Common myeloid progenitor, CD34-positive (primary cell): ENCODE measurements at regions of chr9 and their contacts with region 1.

Region 1: GRCh38 chr9:114397848-114398605 is 10.2 kb upstream of the AKNA start:
- DNase-seq: peak; percentile 92 to 97 (median 95)
- H3K4me3 ChIP-seq: peak overlapping the region; percentile 44 to 87 (median 85)
- H3K27ac ChIP-seq: peak overlapping the region in 1 of 2 experiments; percentile 66
- H3K4me1 ChIP-seq: peaks cover 0 to 31% (median 22%) of the 10 kb centered on the region in 4 experiments
- H3K27me3 ChIP-seq: no peaks in the 10 kb centered on the region

Region 2: GRCh38 chr9:113973851-113974413 is 424.1 kb before region 1 on chr9:
- CTCF ChIA-PET with region 1: no interaction called
- POLR2A ChIA-PET with region 1: no interaction called
- DNase-seq: no peak
- H3K4me3 ChIP-seq: no peak overlapping the region
- H3K27ac ChIP-seq: no peak overlapping the region
- H3K4me1 ChIP-seq: no peaks in the 10 kb centered on the region
- H3K27me3 ChIP-seq: no peaks in the 10 kb centered on the region

Region 3: GRCh38 chr9:114207034-114207810 is 190.8 kb before region 1 on chr9:
- CTCF ChIA-PET with region 1: no interaction called
- POLR2A ChIA-PET with region 1: no interaction called
- DNase-seq: no peak
- H3K4me3 ChIP-seq: no peak overlapping the region
- H3K27ac ChIP-seq: no peak overlapping the region
- H3K4me1 ChIP-seq: no peaks in the 10 kb centered on the region
- H3K27me3 ChIP-seq: no peaks in the 10 kb centered on the region

Region 4: GRCh38 chr9:114366334-114367128 is 31.5 kb before region 1 on chr9:
- CTCF ChIA-PET with region 1: interaction called, 255 read pairs
- POLR2A ChIA-PET with region 1: no interaction called
- DNase-seq: peak in 2 of 3 donors; percentile 68 to 72
- H3K4me3 ChIP-seq: peak overlapping the region in 2 of 7 experiments; percentile 7 to 19
- H3K27ac ChIP-seq: peak overlapping the region; percentile 58 to 60
- H3K4me1 ChIP-seq: peaks cover 45 to 82% (median 73%) of the 10 kb centered on the region in 4 experiments
- H3K27me3 ChIP-seq: no peaks in the 10 kb centered on the region

Region 5: DNA sequence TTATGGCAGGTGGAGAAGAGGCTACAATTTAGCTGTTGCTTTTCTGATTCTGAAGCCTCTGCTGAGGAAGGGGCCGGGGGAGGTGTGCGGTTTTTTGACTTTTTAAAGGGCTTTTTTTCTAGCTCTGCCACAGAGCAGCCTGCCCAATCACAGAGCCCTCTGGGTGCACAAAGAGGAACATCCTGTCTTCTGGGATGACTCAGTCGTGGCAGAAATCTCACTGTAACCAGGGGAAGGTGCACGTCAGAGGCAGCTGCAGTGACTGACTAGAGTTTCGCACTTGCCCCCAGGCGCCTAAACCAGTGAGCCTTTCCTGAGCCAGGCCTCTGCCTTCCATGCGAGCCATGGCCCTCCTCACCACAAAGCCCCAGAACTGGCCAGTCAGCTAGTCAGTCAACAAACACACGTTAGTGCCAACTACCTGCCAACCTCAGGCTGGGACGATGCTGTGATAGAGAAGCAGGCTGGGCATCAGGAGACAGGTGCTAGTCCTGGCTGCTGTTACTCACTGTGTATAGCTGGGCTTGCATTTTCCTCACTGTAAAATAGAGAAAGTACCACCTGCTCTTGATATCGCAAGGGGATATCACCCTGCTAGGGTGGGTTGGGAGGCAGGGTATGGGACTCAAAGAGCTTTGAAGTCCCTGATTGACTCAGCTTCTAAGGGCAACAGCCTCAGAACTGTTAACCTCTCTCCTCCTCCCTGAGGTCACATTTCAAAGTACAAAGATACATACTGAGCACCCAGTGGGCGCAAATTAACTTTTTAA is 12.4 kb before region 1 on chr9:
- CTCF ChIA-PET with region 1: interaction called, 45 read pairs
- POLR2A ChIA-PET with region 1: interaction called, 13 read pairs
- DNase-seq: peak; percentile 91 to 98 (median 97)
- H3K4me3 ChIP-seq: peak overlapping the region in 6 of 7 experiments; percentile 88 to 95 (median 90)
- H3K27ac ChIP-seq: peak overlapping the region; percentile 88 to 89
- H3K4me1 ChIP-seq: peaks cover 41 to 91% (median 85%) of the 10 kb centered on the region in 4 experiments
- H3K27me3 ChIP-seq: no peaks in the 10 kb centered on the region